Breast epithelium (tissue), 4 donors: ENCODE measurements at regions of chr18 and their contacts with region 1.

Region 1: GRCh38 chr18:31942999-31943865 is at the start of gene TRAPPC8:
- DNase-seq: peak; percentile 97 to 98
- H3K4me3 ChIP-seq: peak within 1 kb of the TSS; percentile 68 to 99 (median 82)
- H3K27ac ChIP-seq: peak within 1 kb of the TSS; percentile 93 to 96
- H3K4me1 ChIP-seq: peaks cover 3 to 6% of the 10 kb centered on the region in 2 donors
- H3K27me3 ChIP-seq: no peaks in the 10 kb centered on the region
- CTCF ChIP-seq: peak in 1 of 3 donors; percentile 8
- POLR2A ChIP-seq: no peak
- total RNA-seq, gene TRAPPC8: 39.8 to 75.2 (median 49.8) TPM

Region 2: DNA sequence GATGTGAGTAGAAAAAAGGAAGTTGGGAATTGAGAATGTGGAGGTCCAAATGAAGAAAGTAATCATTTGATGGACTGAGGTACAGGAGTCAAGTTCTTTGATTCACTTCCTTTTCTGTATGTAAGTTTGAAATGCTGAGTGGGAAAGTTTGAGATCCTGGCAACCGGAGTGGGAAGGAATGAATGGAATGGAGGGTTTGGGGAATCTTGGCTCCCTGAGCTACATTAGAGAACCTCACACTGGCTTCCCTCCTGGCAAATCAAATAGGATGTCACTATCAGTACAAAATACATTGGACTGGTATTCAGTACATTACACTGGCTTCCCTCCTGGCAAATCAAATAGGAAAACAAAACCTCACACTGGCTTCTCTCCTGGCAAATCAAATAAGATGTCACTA is 138.6 kb after region 1 on chr18:
- intact Hi-C with region 1: loop called (anchors 5 kb)
- DNase-seq: no peak
- H3K4me3 ChIP-seq: no peak overlapping the region
- H3K27ac ChIP-seq: no peak overlapping the region
- H3K4me1 ChIP-seq: no peaks in the 10 kb centered on the region
- H3K27me3 ChIP-seq: no peaks in the 10 kb centered on the region
- CTCF ChIP-seq: no peak
- POLR2A ChIP-seq: no peak